Left ventricle myocardium inferior (tissue), 1 donor: ENCODE measurements at regions of chr11 and their contacts with region 1.

Region 1: DNA sequence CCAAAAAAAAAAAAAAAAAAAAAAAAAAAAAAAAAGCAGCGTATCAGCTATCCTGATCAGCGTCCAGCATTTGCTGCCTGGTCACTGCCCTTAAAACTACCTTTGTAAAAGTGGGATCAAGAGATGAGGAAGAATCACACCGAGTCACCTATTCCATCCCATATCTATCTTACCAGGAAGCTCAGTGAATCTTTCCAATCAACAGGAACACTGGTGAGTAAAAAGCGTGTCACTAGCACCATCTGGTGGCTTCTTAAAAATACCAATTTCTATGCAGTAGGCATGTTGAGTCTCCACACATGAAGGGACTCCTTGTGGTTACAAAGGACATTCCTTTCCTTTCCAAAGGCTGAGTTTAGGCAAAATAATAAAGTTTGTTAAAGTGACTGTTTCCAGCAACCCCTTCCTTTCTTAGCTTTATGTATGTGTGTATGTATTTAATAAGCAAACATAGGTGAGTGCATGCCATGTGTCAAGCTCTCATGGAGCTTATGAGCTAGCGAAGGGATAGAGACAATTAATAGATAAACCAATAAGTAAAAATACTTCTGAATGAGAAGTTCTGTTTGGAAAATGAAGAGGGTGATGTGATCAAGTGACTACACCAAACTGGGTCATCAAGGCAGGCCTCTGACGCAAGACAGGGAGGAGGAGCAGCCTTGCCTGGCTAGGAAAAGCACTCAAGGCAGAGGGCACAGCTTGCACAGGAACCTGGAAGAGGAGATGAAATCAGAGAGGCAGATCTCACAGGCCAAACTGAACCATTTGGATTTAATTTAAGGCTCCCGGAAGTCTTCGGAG is 13.9 kb upstream of the TP53AIP1 start:
- DNase-seq: no peak
- H3K4me3 ChIP-seq: no peak overlapping the region
- H3K27ac ChIP-seq: no peak overlapping the region
- H3K4me1 ChIP-seq: no peaks in the 10 kb centered on the region
- H3K27me3 ChIP-seq: peaks cover 29% of the 10 kb centered on the region
- CTCF ChIP-seq: peak; percentile 77

Region 2: DNA sequence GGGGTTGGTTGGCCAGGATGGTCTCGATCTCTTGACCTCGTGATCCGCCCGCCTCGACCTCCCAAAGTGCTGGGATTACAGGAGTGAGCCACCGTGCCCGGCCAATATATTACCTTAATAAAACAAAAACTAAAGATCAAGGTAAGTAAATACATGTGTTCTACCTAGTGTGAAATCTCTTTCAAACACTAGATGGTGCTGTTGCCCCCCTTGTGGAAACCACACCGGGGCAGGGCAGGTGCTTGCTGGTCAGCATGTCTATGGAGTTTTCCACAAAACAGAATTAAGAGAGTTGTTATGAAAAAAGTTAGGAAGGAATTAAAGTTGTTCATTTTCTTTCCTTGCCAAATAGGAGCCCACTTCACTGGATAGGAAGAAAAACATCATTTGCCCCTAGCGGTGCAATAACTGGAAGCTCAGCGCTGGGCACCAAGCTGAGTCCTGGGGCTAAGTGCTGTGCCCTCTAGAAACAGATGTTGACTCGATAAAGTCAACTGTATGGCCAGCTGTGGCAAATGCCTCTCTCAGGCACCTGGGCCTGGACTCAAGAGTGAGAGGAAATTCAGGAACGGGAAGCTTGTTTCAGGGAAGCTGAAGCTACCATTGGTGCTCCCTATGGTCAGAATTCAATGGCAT is 71.8 kb before region 1 on chr11:
- intact Hi-C with region 1: loop called (anchors 2 kb)
- DNase-seq: no peak
- H3K4me3 ChIP-seq: no peak overlapping the region
- H3K27ac ChIP-seq: no peak overlapping the region
- H3K4me1 ChIP-seq: no peaks in the 10 kb centered on the region
- H3K27me3 ChIP-seq: peaks cover 25% of the 10 kb centered on the region
- CTCF ChIP-seq: peak; percentile 89

Region 3: GRCh38 chr11:129006161-129006560 is 49.6 kb after region 1 on chr11:
- intact Hi-C with region 1: no loop called
- DNase-seq: no peak
- H3K4me3 ChIP-seq: no peak overlapping the region
- H3K27ac ChIP-seq: no peak overlapping the region
- H3K4me1 ChIP-seq: no peaks in the 10 kb centered on the region
- H3K27me3 ChIP-seq: no peaks in the 10 kb centered on the region
- CTCF ChIP-seq: no peak